CD4-positive, alpha-beta memory T cell (primary cell): ENCODE measurements at regions of chr12 and their contacts with region 1.

Region 1: DNA sequence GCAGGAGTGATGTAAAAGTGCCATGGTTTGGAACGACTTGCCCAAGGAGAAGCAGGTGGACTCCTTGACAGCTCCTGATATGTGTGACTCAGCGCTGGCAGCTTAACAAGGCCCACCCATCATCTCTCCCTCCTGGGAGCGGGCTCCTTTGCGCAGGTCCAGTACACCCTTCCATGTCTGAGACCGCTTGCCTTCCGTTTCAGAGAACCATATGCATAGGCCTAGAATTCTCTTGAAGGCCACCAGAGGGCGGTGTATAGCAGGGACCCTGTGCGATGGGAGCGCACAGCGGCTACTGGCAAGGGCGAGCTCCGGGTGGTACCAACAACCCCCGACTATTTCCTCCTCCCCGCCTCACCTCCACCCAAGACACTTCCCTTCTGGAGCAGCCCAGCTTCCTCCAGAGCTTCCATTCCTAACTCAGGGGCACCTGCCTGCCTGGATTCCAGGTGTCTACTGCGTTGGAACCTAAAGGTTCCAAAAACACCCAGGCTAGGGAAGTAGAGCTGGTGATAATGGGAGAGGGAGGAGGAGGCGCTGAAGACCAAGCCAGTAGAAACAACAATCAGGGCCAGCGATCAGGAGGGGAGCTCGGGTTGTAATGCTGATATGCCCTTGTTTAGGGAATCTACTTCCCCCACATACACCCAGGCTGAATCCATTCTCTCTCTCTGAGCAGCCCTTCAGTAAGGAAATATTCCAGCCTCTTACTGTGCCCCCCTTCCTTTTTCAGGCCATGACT is 6.2 kb downstream of the DHH start:
- DNase-seq: peak; percentile 68 to 73 (median 69)
- H3K4me3 ChIP-seq: no peak overlapping the region
- H3K4me3 Mint-ChIP-seq: peak overlapping the region in 7 of 8 donors; percentile 17 to 83 (median 56)
- H3K27ac ChIP-seq: no peak overlapping the region
- H3K27ac Mint-ChIP-seq: peak overlapping the region in 4 of 7 donors; percentile 2 to 67 (median 37)
- H3K4me1 ChIP-seq: peaks cover 56% of the 10 kb centered on the region
- H3K4me1 Mint-ChIP-seq: peaks cover 23 to 66% (median 40%) of the 10 kb centered on the region in 4 donors
- H3K27me3 ChIP-seq: peaks cover 41% of the 10 kb centered on the region
- H3K27me3 Mint-ChIP-seq: peaks cover 26 to 41% of the 10 kb centered on the region in 2 donors

Region 2: GRCh38 chr12:49043856-49044258 is 44.5 kb before region 1 on chr12:
- CTCF ChIA-PET with region 1: interaction called, 11 read pairs
- POLR2A ChIA-PET with region 1: no interaction called
- intact Hi-C with region 1: no loop called
- DNase-seq: peak; percentile 74 to 84 (median 77)
- H3K4me3 ChIP-seq: no peak overlapping the region
- H3K4me3 Mint-ChIP-seq: no peak overlapping the region
- H3K27ac ChIP-seq: no peak overlapping the region
- H3K27ac Mint-ChIP-seq: peak overlapping the region; percentile 24 to 88 (median 75)
- H3K4me1 ChIP-seq: no peaks in the 10 kb centered on the region
- H3K4me1 Mint-ChIP-seq: peaks cover 3 to 10% (median 4%) of the 10 kb centered on the region in 4 donors
- H3K27me3 ChIP-seq: no peaks in the 10 kb centered on the region
- H3K27me3 Mint-ChIP-seq: no peaks in the 10 kb centered on the region

Region 3: GRCh38 chr12:49105608-49106007 is 17.2 kb after region 1 on chr12:
- CTCF ChIA-PET with region 1: interaction called, 91 read pairs
- POLR2A ChIA-PET with region 1: interaction called, 23 read pairs
- intact Hi-C with region 1: loop called (anchors 1 kb)
- DNase-seq: no peak
- H3K4me3 ChIP-seq: no peak overlapping the region
- H3K4me3 Mint-ChIP-seq: peak overlapping the region in 1 of 8 donors; percentile 25
- H3K27ac ChIP-seq: no peak overlapping the region
- H3K27ac Mint-ChIP-seq: no peak overlapping the region
- H3K4me1 ChIP-seq: peaks cover 15% of the 10 kb centered on the region
- H3K4me1 Mint-ChIP-seq: peaks cover 20 to 40% (median 31%) of the 10 kb centered on the region in 4 donors
- H3K27me3 ChIP-seq: no peaks in the 10 kb centered on the region
- H3K27me3 Mint-ChIP-seq: no peaks in the 10 kb centered on the region

Region 4: GRCh38 chr12:49223590-49224369 is 135.4 kb after region 1 on chr12:
- CTCF ChIA-PET with region 1: interaction called, 13 read pairs
- POLR2A ChIA-PET with region 1: no interaction called
- intact Hi-C with region 1: no loop called
- DNase-seq: no peak
- H3K4me3 ChIP-seq: no peak overlapping the region
- H3K4me3 Mint-ChIP-seq: no peak overlapping the region
- H3K27ac ChIP-seq: no peak overlapping the region
- H3K27ac Mint-ChIP-seq: peak overlapping the region in 1 of 7 donors; percentile 4
- H3K4me1 ChIP-seq: no peaks in the 10 kb centered on the region
- H3K4me1 Mint-ChIP-seq: no peaks in the 10 kb centered on the region
- H3K27me3 ChIP-seq: no peaks in the 10 kb centered on the region
- H3K27me3 Mint-ChIP-seq: no peaks in the 10 kb centered on the region

Region 5: DNA sequence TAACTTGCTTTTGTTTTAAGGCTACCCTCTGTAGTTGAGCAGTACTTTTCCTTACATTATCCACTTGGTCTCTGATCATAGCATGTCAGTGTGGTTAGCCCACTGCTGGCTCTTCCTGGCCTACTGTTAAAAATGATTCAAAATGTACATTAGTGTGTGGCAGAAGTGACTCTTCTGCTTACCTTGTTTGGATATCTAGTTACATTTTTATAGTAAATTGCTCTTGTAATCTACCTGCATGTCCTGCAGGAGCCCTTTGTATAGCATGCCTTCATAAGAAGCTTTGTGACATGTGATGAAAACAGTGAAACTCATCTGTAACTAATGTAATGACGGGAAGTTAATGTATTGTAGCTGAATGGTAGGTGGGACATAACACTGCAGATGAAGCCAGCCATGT is 287.0 kb after region 1 on chr12:
- CTCF ChIA-PET with region 1: no interaction called
- POLR2A ChIA-PET with region 1: no interaction called
- intact Hi-C with region 1: no loop called
- DNase-seq: no peak
- H3K4me3 ChIP-seq: no peak overlapping the region
- H3K4me3 Mint-ChIP-seq: no peak overlapping the region
- H3K27ac ChIP-seq: no peak overlapping the region
- H3K27ac Mint-ChIP-seq: no peak overlapping the region
- H3K4me1 ChIP-seq: no peaks in the 10 kb centered on the region
- H3K4me1 Mint-ChIP-seq: peaks cover 0 to 4% (median 2%) of the 10 kb centered on the region in 4 donors
- H3K27me3 ChIP-seq: no peaks in the 10 kb centered on the region
- H3K27me3 Mint-ChIP-seq: no peaks in the 10 kb centered on the region

Region 6: DNA sequence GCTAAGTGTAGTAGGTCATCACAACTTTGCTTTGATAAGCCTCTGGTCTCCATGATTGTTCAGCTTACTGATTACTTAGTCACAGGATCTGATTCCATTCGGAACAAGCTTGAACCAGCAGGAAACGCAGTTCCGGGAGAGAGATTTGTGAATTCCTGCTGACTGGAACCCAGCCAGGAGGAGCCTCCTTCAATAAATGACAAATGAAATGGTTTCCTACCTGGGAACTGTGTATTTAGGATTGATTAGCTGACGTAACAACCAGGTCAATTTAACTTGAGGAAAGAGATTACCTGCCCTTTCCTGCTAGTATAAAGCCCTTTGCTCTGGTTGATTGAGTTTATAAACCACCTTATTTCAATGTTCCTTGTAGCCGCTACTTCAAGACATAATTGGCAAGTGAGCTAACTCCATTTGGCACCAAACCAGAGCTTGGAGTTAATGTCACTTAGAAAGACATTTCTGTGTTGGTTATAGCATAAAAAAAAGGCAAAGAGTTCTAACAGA is 415.4 kb after region 1 on chr12:
- CTCF ChIA-PET with region 1: no interaction called
- POLR2A ChIA-PET with region 1: no interaction called
- intact Hi-C with region 1: no loop called
- DNase-seq: no peak
- H3K4me3 ChIP-seq: no peak overlapping the region
- H3K4me3 Mint-ChIP-seq: no peak overlapping the region
- H3K27ac ChIP-seq: no peak overlapping the region
- H3K27ac Mint-ChIP-seq: no peak overlapping the region
- H3K4me1 ChIP-seq: no peaks in the 10 kb centered on the region
- H3K4me1 Mint-ChIP-seq: no peaks in the 10 kb centered on the region
- H3K27me3 ChIP-seq: no peaks in the 10 kb centered on the region
- H3K27me3 Mint-ChIP-seq: no peaks in the 10 kb centered on the region